Cardiac septum (tissue), 1 donor: ENCODE measurements at regions of chr6 and their contacts with region 1.

Region 1: DNA sequence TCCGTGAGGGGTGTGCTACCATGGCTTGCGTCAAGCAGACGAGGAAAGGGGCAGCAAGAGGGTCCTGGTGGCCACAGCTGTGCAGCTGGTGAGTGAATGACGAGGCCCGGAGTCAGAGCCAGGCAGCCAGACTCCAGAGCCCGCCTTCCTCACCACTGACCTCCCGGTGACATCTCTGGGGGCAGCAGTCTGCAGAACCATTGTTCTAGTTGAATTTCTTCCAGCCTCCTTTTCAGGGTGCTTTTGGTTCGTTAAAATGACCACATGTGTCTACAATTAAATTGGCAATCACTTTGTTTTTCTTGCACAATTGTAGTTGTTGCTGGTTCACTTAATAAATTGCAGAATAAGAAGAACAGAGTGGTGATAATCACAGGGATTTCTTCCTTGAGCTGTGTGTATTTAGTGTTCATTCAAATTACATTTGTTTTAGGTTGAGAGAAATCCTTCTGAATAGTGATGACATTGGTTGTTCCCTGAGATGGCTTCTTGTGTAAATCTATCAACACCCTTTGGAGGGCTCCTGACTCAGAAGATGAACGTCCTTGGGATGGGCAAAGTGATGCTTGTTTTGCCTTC is 96.4 kb downstream of the TULP4 start:
- DNase-seq: no peak

Region 2: GRCh38 chr6:158231551-158232315 is 176.9 kb before region 1 on chr6:
- intact Hi-C with region 1: loop called (anchors 5 kb)
- DNase-seq: peak; percentile 81